ENCODE measurements at regions of chr1 and their contacts with region 1.

Region 1: DNA sequence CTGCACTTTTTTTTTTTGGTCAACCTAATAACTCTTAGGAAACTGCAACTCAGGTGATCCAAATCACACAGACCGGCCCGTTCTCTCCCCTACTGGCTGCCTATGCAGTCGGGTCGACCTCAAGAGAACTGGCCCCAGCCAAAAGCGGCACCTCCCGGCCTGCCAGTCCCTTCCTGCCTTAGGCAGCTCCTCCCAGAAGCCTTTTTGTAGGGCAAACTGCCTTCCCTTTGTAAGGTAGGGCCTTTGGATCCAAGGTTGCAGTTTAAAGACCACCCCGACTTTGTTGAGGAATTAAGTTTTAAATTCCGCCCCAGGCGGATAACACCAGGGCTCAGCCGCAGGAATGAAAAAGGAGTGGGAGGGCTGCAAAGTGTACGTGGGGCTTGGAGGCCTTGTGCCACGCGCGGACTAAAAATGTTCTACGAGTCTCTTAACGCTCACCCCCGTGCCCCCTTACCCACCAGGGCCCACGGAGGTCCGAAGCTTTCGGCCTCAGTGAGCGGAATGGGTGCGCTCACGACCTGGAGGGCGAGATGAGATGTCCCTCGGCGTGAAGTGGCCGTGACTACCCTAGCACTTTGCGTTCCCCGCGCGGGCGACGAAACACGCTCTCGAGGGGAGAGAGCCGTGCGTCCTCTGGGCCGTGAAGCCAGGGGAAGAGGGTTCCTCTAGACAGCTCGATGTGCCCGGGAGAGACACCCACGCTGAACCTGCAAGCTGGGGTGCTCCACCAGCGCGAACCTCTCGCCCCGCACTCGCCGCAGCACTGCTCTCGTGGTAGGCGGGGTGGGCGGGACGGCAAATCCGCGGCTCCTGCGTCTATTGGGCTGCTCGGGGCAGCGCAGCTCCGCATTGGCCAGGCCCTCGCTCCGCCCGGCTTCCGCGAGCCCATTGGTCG is 489 bp upstream of the ST3GAL3 start:
- DNase-seq: peak; percentile 85 to 92 (median 87)
- H3K4me3 ChIP-seq: peak overlapping the region; percentile 78
- H3K4me3 Mint-ChIP-seq: peak overlapping the region; percentile 85 to 94 (median 87)
- H3K27ac ChIP-seq: peak overlapping the region; percentile 76
- H3K27ac Mint-ChIP-seq: peak overlapping the region; percentile 45 to 89 (median 68)
- H3K4me1 ChIP-seq: peaks cover 18% of the 10 kb centered on the region
- H3K4me1 Mint-ChIP-seq: peaks cover 25 to 36% (median 28%) of the 10 kb centered on the region in 3 donors
- H3K27me3 ChIP-seq: no peaks in the 10 kb centered on the region
- H3K27me3 Mint-ChIP-seq: no peaks in the 10 kb centered on the region

Region 2: GRCh38 chr1:43650310-43651085 is 56.3 kb before region 1 on chr1:
- CTCF ChIA-PET with region 1: no interaction called
- POLR2A ChIA-PET with region 1: interaction called, 16 read pairs
- DNase-seq: peak; percentile 84 to 94 (median 89)
- H3K4me3 ChIP-seq: peak overlapping the region; percentile 93
- H3K4me3 Mint-ChIP-seq: peak overlapping the region; percentile 91 to 100 (median 95)
- H3K27ac ChIP-seq: peak overlapping the region; percentile 88
- H3K27ac Mint-ChIP-seq: peak overlapping the region; percentile 88 to 98 (median 94)
- H3K4me1 ChIP-seq: peaks cover 17% of the 10 kb centered on the region
- H3K4me1 Mint-ChIP-seq: peaks cover 36 to 49% (median 48%) of the 10 kb centered on the region in 3 donors
- H3K27me3 ChIP-seq: no peaks in the 10 kb centered on the region
- H3K27me3 Mint-ChIP-seq: no peaks in the 10 kb centered on the region